Heart right ventricle (tissue), 16 donors: ENCODE measurements at regions of chr5 and their contacts with region 1.

Region 1: GRCh38 chr5:99060306-99061261 is 131.8 kb upstream of the CHD1 start:
- DNase-seq: peak; percentile 67 to 70
- ATAC-seq: no peak
- H3K4me3 ChIP-seq: no peak overlapping the region
- H3K27ac ChIP-seq: no peak overlapping the region
- H3K4me1 ChIP-seq: peaks cover 0 to 10% (median 0%) of the 10 kb centered on the region in 9 donors
- H3K27me3 ChIP-seq: peaks cover 0 to 3% (median 0%) of the 10 kb centered on the region in 7 donors
- CTCF ChIP-seq: peak; percentile 73 to 95 (median 90)

Region 2: DNA sequence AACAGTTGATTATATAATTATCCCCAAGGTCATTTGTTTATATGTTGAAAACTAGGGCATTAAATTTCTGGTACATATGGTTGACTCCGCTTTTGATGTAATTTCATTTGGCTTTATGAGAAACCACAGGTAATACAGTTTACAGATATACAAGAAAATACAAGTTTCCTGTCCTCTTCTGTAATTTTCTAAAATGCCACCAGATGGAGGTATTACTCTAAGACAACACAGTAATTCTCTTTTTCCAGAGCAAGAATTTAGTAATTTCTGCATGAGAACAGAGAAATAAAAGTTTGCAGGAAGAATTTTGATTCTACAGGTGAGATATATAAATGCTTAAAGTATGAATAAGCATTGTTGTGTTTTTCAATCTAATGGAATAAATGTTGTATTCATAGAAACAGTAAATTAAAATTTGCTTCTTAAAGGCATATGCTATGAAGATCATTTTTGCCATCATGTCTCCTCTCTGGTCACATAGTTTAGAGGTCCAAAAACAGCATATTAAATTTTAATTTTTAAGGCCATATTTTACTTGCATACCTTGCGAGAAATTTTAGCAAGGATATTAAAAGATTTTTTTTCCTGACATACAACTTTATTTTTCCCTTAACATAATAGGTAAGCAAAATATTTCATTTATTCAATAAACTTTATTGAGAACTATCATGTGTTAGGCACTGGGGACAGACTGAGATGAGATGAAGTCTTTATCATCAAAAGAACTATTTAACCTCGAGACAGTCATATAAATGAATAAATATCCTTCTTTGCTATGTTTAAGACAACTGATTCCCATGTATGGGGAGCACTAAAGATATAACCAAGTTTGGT is 154.5 kb before region 1 on chr5:
- intact Hi-C with region 1: loop called in 4 of 10 experiments (anchors 1 to 10 kb)
- DNase-seq: no peak
- ATAC-seq: peak in 3 of 8 donors; percentile 35 to 67 (median 56)
- H3K4me3 ChIP-seq: no peak overlapping the region
- H3K27ac ChIP-seq: peak overlapping the region in 1 of 10 donors; percentile 18
- H3K4me1 ChIP-seq: peaks cover 0 to 43% (median 22%) of the 10 kb centered on the region in 9 donors
- H3K27me3 ChIP-seq: no peaks in the 10 kb centered on the region
- CTCF ChIP-seq: peak; percentile 70 to 89 (median 75)

Region 3: GRCh38 chr5:99032234-99033013 is 28.2 kb before region 1 on chr5:
- intact Hi-C with region 1: loop called in 1 of 10 experiments (anchors 1 kb)
- DNase-seq: peak in 1 of 2 donors; percentile 76
- ATAC-seq: peak in 7 of 8 donors; percentile 83 to 90 (median 85)
- H3K4me3 ChIP-seq: peak overlapping the region in 8 of 10 donors; percentile 6 to 51 (median 38)
- H3K27ac ChIP-seq: peak overlapping the region in 9 of 10 donors; percentile 5 to 88 (median 56)
- H3K4me1 ChIP-seq: peaks cover 0 to 47% (median 8%) of the 10 kb centered on the region in 9 donors
- H3K27me3 ChIP-seq: no peaks in the 10 kb centered on the region
- CTCF ChIP-seq: peak; percentile 56 to 92 (median 79)